CD8-positive, alpha-beta T cell (primary cell): ENCODE measurements at regions of chr2 and their contacts with region 1.

Region 1: GRCh38 chr2:237674731-237675276 is 47.4 kb downstream of the LRRFIP1 start:
- DNase-seq: peak; percentile 74 to 97 (median 86)
- ATAC-seq: peak; percentile 54
- H3K4me3 ChIP-seq: peak overlapping the region; percentile 37 to 63
- H3K4me3 Mint-ChIP-seq: peak overlapping the region; percentile 88
- H3K27ac ChIP-seq: peak overlapping the region; percentile 94
- H3K27ac Mint-ChIP-seq: peak overlapping the region; percentile 98
- H3K4me1 ChIP-seq: peaks cover 42% of the 10 kb centered on the region
- H3K4me1 Mint-ChIP-seq: peaks cover 52% of the 10 kb centered on the region
- H3K27me3 ChIP-seq: no peaks in the 10 kb centered on the region
- H3K27me3 Mint-ChIP-seq: no peaks in the 10 kb centered on the region
- CTCF ChIP-seq: no peak

Region 2: GRCh38 chr2:237512774-237513466 is 161.9 kb before region 1 on chr2:
- CTCF ChIA-PET with region 1: interaction called, 25 read pairs
- POLR2A ChIA-PET with region 1: no interaction called
- intact Hi-C with region 1: loop called in 1 of 2 experiments (anchors 5 kb)
- DNase-seq: peak; percentile 48 to 85 (median 77)
- ATAC-seq: peak; percentile 86
- H3K4me3 ChIP-seq: no peak overlapping the region
- H3K4me3 Mint-ChIP-seq: no peak overlapping the region
- H3K27ac ChIP-seq: no peak overlapping the region
- H3K27ac Mint-ChIP-seq: no peak overlapping the region
- H3K4me1 ChIP-seq: no peaks in the 10 kb centered on the region
- H3K4me1 Mint-ChIP-seq: no peaks in the 10 kb centered on the region
- H3K27me3 ChIP-seq: no peaks in the 10 kb centered on the region
- H3K27me3 Mint-ChIP-seq: peaks cover 3% of the 10 kb centered on the region
- CTCF ChIP-seq: peak; percentile 83

Region 3: GRCh38 chr2:237685408-237685807 is 10.6 kb after region 1 on chr2:
- CTCF ChIA-PET with region 1: interaction called, 328 read pairs
- POLR2A ChIA-PET with region 1: interaction called, 119 read pairs
- intact Hi-C with region 1: loop called (anchors 1 kb)
- DNase-seq: no peak
- ATAC-seq: no peak
- H3K4me3 ChIP-seq: no peak overlapping the region
- H3K4me3 Mint-ChIP-seq: no peak overlapping the region
- H3K27ac ChIP-seq: no peak overlapping the region
- H3K27ac Mint-ChIP-seq: peak overlapping the region; percentile 80
- H3K4me1 ChIP-seq: peaks cover 36% of the 10 kb centered on the region
- H3K4me1 Mint-ChIP-seq: peaks cover 43% of the 10 kb centered on the region
- H3K27me3 ChIP-seq: no peaks in the 10 kb centered on the region
- H3K27me3 Mint-ChIP-seq: no peaks in the 10 kb centered on the region
- CTCF ChIP-seq: no peak

Region 4: DNA sequence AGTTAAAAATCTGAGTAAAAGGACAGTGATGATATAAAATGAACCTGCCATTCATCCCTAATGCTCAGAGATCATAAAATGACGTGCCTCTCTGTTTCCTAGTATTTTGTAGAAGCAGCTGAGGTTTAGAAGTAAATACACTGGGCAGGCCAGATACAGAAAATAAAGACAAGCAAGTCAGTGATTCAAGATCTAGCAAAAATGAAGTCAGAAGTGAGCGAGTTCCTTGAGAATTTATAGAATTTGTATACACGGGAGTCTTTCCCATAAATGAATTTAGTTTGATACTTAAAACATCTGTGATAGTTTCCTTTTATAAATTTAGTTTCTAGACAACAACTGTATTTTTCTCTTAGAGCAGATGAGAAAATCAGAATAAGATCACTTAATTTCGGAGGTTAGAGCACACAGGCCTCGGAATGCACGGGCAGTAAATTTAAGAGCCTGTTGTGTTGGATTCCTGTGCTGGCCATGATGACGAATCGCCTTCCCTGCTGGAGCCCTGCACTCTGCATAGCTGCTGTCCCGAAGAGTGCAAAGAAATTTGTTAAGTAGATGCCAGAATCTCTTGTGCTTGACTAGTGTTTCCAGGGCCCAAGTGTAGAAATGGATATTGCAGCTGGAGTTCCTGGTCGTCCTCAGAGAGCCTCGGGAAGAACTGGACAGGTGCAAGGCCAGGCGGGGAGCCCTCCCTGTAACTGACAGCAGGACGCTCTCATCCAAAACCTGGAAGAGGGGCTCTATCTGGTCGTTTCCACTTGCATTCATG is 40.1 kb after region 1 on chr2:
- CTCF ChIA-PET with region 1: interaction called, 328 read pairs
- POLR2A ChIA-PET with region 1: interaction called, 3 read pairs
- intact Hi-C with region 1: no loop called
- DNase-seq: no peak
- ATAC-seq: no peak
- H3K4me3 ChIP-seq: no peak overlapping the region
- H3K4me3 Mint-ChIP-seq: peak overlapping the region; percentile 29
- H3K27ac ChIP-seq: no peak overlapping the region
- H3K27ac Mint-ChIP-seq: peak overlapping the region; percentile 28
- H3K4me1 ChIP-seq: peaks cover 10% of the 10 kb centered on the region
- H3K4me1 Mint-ChIP-seq: peaks cover 56% of the 10 kb centered on the region
- H3K27me3 ChIP-seq: no peaks in the 10 kb centered on the region
- H3K27me3 Mint-ChIP-seq: no peaks in the 10 kb centered on the region
- CTCF ChIP-seq: no peak

Region 5: GRCh38 chr2:237744613-237745249 is 69.9 kb after region 1 on chr2:
- CTCF ChIA-PET with region 1: interaction called, 399 read pairs
- POLR2A ChIA-PET with region 1: interaction called, 9 read pairs
- intact Hi-C with region 1: loop called (anchors 1 kb)
- DNase-seq: peak; percentile 59 to 90 (median 79)
- ATAC-seq: peak; percentile 78
- H3K4me3 ChIP-seq: no peak overlapping the region
- H3K4me3 Mint-ChIP-seq: no peak overlapping the region
- H3K27ac ChIP-seq: peak overlapping the region in 1 of 2 experiments; percentile 37
- H3K27ac Mint-ChIP-seq: peak overlapping the region; percentile 76
- H3K4me1 ChIP-seq: peaks cover 6% of the 10 kb centered on the region
- H3K4me1 Mint-ChIP-seq: peaks cover 41% of the 10 kb centered on the region
- H3K27me3 ChIP-seq: no peaks in the 10 kb centered on the region
- H3K27me3 Mint-ChIP-seq: no peaks in the 10 kb centered on the region
- CTCF ChIP-seq: peak; percentile 98

Region 6: DNA sequence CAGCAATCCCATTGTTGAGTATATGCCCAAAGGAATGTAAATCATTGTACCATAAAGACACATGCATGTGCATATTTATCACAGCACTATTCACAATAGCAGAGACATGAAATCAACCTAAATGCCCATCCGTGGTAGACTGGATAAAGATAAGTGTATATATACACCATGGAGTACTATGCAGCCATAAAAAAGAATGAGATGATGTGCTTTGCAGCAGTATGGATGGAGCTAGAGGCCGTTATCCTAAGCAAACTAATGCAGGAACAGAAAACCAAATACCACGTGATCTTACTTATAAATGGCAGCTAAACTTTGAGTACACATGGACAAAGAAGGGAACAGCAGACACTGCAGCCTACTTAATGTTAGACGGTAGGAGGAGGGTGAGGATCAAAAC is 166.2 kb after region 1 on chr2:
- CTCF ChIA-PET with region 1: no interaction called
- POLR2A ChIA-PET with region 1: no interaction called
- intact Hi-C with region 1: no loop called
- DNase-seq: no peak
- ATAC-seq: no peak
- H3K4me3 ChIP-seq: no peak overlapping the region
- H3K4me3 Mint-ChIP-seq: no peak overlapping the region
- H3K27ac ChIP-seq: no peak overlapping the region
- H3K27ac Mint-ChIP-seq: no peak overlapping the region
- H3K4me1 ChIP-seq: no peaks in the 10 kb centered on the region
- H3K4me1 Mint-ChIP-seq: no peaks in the 10 kb centered on the region
- H3K27me3 ChIP-seq: no peaks in the 10 kb centered on the region
- H3K27me3 Mint-ChIP-seq: peaks cover 5% of the 10 kb centered on the region
- CTCF ChIP-seq: no peak

Region 7: GRCh38 chr2:238060542-238061314 is 385.9 kb after region 1 on chr2 and contains the start of gene SCLY:
- CTCF ChIA-PET with region 1: no interaction called
- POLR2A ChIA-PET with region 1: no interaction called
- intact Hi-C with region 1: loop called in 1 of 2 experiments (anchors 5 kb)
- DNase-seq: peak; percentile 90 to 99 (median 96)
- ATAC-seq: peak; percentile 97
- H3K4me3 ChIP-seq: peak within 1 kb of the TSS; percentile 77 to 88
- H3K4me3 Mint-ChIP-seq: peak within 1 kb of the TSS; percentile 81
- H3K27ac ChIP-seq: peak within 1 kb of the TSS; percentile 81 to 83
- H3K27ac Mint-ChIP-seq: peak within 1 kb of the TSS; percentile 89
- H3K4me1 ChIP-seq: peaks cover 16% of the 10 kb centered on the region
- H3K4me1 Mint-ChIP-seq: peaks cover 39% of the 10 kb centered on the region
- H3K27me3 ChIP-seq: no peaks in the 10 kb centered on the region
- H3K27me3 Mint-ChIP-seq: peaks cover 3% of the 10 kb centered on the region
- CTCF ChIP-seq: no peak
- total RNA-seq, gene SCLY: 5.8 to 11.8 TPM